ENCODE measurements at regions of chr2 and their contacts with region 1.

Region 1: GRCh38 chr2:156332534-156333273 is at the start of gene NR4A2:
- DNase-seq: no peak
- H3K4me3 ChIP-seq: peak within 1 kb of the TSS; percentile 86
- H3K27me3 ChIP-seq: peaks cover 5% of the 10 kb centered on the region
- CTCF ChIP-seq: no peak
- polyA plus RNA-seq, gene NR4A2: 0.50 and 1.5 TPM in 2 replicates

Region 2: GRCh38 chr2:155895016-155895415 is 437.7 kb before region 1 on chr2:
- CTCF ChIA-PET with region 1: no interaction called
- POLR2A ChIA-PET with region 1: no interaction called
- DNase-seq: no peak
- H3K4me3 ChIP-seq: no peak overlapping the region
- H3K27me3 ChIP-seq: no peaks in the 10 kb centered on the region
- CTCF ChIP-seq: no peak

Region 3: DNA sequence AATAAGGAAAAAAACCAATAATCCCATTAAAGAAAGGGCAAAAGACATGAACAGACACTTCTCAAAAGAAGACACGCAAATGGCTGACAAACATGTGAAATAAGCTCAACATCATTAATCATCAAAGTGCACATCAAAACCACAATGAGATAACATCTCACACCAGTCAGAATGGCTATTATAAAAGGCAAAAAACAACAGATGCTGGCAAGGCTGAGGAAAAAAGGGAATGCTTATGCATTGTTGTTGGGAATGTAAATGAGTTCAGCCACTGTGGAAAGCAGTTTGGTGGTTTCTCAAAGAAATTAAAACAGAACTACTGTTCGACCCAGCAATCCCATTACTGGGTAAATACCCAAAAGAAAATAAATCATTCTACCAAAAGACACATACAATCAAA is 285.8 kb before region 1 on chr2:
- CTCF ChIA-PET with region 1: no interaction called
- POLR2A ChIA-PET with region 1: no interaction called
- DNase-seq: no peak
- H3K4me3 ChIP-seq: no peak overlapping the region
- H3K27me3 ChIP-seq: no peaks in the 10 kb centered on the region
- CTCF ChIP-seq: no peak

Region 4: DNA sequence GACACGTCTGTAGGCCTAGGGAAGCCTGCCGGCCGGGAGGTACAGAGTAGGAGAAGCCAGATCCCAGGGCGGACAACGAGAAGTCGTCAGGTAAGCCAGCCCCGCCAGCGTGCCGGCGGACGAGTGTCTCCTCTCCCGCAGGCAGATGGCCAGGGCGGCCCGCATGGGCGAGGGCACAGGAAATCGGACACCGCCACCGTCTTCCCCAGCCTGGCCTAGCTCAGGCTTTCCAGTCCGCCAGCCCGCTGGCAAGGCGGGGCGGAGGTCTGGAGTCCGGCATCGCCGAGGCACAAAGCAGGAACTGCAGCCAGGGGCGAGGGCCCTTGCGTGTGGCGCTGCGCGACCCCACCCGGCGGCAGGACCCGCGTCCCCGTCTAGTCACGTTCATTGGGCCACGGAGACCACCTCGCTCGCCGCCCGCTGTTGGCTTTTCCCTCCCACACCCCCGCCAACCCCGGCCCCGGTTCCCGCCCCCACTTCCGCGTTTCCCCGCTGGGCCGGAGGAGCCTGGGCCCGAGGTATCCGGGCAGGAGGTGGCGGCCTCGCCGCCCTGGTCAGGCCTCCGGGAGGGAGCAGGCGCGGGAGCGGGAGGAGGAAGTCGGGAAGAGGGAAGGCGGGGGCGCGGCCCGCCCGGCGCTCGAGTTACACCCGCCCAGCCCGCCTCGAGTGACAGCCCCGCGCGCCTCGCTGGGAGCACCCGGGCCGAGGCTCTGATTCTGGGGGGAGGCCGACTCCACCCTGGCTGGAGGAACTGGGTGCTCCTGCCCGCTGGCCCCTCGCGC is 103.2 kb after region 1 on chr2 and contains the start of gene GPD2:
- CTCF ChIA-PET with region 1: interaction called, 12 read pairs
- POLR2A ChIA-PET with region 1: no interaction called
- DNase-seq: no peak
- H3K4me3 ChIP-seq: peak within 1 kb of the TSS; percentile 70
- H3K27me3 ChIP-seq: no peaks in the 10 kb centered on the region
- CTCF ChIP-seq: 0 out of 2 replicates have a peak, but pooled peaks have one; percentile 7
- polyA plus RNA-seq, gene GPD2: 13.5 and 22.5 TPM in 2 replicates

Region 5: DNA sequence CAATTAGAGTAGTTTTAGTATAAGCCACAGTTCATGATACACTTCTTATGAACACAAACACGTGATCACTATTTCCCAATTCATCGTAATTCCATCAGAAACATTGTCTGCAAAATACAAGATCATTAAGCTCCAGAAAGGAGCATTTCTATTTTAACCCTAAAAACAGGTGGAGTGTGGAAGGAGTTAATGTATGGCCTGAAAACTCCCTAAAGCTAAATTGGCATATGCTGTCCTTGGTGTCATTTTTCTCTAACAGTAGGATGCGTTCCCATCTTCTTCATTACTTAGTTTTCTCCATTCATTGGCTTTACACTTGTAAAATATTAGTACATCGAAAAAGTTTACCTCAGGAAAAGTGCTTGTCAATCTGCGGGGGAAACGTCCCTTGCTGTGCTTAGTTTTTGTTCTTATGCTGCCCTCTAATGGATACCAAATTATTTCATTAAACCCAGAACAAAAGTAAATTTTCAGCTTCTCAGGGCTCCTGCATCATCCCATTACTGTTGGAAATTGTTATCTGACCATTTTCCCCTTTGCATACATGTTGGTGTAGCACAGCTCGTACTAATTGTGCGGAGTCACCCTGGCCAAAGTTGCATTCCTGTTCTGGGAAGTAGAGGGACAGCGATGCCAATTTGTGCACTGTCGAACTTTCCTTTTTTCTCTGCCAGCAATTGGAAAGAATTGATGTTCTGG is 256.8 kb after region 1 on chr2:
- CTCF ChIA-PET with region 1: interaction called, 43 read pairs
- POLR2A ChIA-PET with region 1: interaction called, 4 read pairs
- DNase-seq: no peak
- H3K4me3 ChIP-seq: no peak overlapping the region
- H3K27me3 ChIP-seq: no peaks in the 10 kb centered on the region
- CTCF ChIP-seq: peak; percentile 53

Measured in BJ (cell line).